ENCODE measurements at regions of chr5 and their contacts with region 1.

Region 1: GRCh38 chr5:76544268-76544926 is 78.8 kb downstream of the F2RL2 start:
- DNase-seq: peak; percentile 79
- ATAC-seq: peak; percentile 34
- H3K4me3 Mint-ChIP-seq: peak overlapping the region; percentile 73
- H3K27ac Mint-ChIP-seq: peak overlapping the region; percentile 100
- H3K4me1 Mint-ChIP-seq: peaks cover 90% of the 10 kb centered on the region
- H3K27me3 Mint-ChIP-seq: no peaks in the 10 kb centered on the region

Region 2: DNA sequence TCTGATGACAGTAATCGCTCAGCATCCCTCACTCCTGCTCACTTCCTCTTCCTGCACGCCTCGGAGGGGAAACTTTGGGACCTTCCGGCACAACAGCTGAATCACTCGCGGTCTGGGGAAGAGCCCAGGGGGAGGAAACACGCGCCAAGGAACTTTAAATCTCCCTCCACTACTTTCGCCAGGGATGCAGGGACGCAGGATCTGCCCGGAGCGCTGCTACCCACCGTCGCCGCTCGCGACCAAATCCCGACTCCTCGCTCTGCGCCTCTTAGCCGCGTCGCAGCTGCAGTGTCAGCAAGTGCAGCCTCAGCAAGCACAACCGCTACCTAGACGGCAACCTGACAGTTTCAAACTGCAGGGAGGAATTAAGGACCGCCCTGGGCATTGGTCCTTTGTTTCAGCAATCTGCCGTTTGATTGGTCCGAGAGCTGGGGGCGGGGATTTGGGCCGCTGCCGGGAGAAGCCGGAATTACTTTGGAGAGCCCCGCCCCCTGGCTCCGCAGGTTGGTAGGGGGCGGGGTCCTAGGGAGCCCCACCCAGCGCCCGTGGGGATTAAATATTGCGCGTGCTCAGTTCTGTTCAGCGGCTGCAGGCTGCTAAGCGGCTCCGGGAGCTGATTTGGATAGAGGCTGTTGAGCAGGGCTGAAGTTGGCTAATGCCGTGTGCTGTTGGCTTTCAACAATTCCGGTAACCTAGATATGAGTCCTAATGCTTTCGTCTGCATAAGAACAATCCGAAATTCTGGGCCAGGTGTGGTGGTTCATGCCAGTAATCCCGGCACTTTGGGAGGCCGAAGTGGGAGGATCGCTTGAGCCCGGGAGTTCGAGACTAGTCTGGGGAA is 827.1 kb before region 1 on chr5 and contains the start of gene POC5:
- CTCF ChIA-PET with region 1: no interaction called
- POLR2A ChIA-PET with region 1: no interaction called
- intact Hi-C with region 1: loop called in 1 of 2 experiments (anchors 2 kb)
- DNase-seq: peak; percentile 99
- ATAC-seq: peak; percentile 94
- H3K4me3 Mint-ChIP-seq: peak within 1 kb of the TSS; percentile 97
- H3K27ac Mint-ChIP-seq: peak within 1 kb of the TSS; percentile 99
- H3K4me1 Mint-ChIP-seq: peaks cover 32% of the 10 kb centered on the region
- H3K27me3 Mint-ChIP-seq: no peaks in the 10 kb centered on the region
- total RNA-seq, gene POC5: 20.2 to 20.3 TPM

Region 3: GRCh38 chr5:76180814-76181805 is 363.3 kb before region 1 on chr5:
- CTCF ChIA-PET with region 1: interaction called, 6 read pairs
- POLR2A ChIA-PET with region 1: no interaction called
- intact Hi-C with region 1: loop called (anchors 5 to 10 kb)
- DNase-seq: peak; percentile 28
- ATAC-seq: peak; percentile 82
- H3K4me3 Mint-ChIP-seq: no peak overlapping the region
- H3K27ac Mint-ChIP-seq: no peak overlapping the region
- H3K4me1 Mint-ChIP-seq: peaks cover 21% of the 10 kb centered on the region
- H3K27me3 Mint-ChIP-seq: no peaks in the 10 kb centered on the region

Region 4: GRCh38 chr5:76337953-76338451 is 206.4 kb before region 1 on chr5:
- CTCF ChIA-PET with region 1: interaction called, 14 read pairs
- POLR2A ChIA-PET with region 1: no interaction called
- intact Hi-C with region 1: loop called (anchors 1 kb)
- DNase-seq: peak; percentile 47
- ATAC-seq: peak; percentile 80
- H3K4me3 Mint-ChIP-seq: no peak overlapping the region
- H3K27ac Mint-ChIP-seq: no peak overlapping the region
- H3K4me1 Mint-ChIP-seq: peaks cover 25% of the 10 kb centered on the region
- H3K27me3 Mint-ChIP-seq: no peaks in the 10 kb centered on the region

Region 5: DNA sequence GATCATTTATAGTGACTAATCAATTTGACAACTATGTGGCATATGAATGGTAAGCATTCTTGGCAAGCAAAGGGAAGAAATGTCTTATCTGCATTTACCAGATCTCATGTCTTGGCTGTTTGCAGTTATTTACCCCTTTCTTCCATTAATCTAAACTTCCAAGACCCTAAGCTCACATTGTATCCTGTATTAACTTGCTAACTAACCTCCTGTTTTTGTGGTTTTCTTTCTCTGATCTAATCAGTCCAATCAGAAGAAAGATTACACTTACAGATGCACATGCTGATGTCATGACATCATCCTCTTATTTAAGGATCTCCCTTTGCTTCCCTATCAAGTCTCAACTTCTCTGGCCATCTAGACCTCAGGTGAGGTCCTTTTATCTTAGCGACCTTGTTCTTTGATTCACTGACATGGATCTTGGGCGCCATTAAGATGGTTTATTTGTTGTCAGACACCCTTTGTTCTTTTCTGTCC is 16.7 kb before region 1 on chr5:
- CTCF ChIA-PET with region 1: interaction called, 30 read pairs
- POLR2A ChIA-PET with region 1: interaction called, 12 read pairs
- intact Hi-C with region 1: no loop called
- DNase-seq: no peak
- ATAC-seq: no peak
- H3K4me3 Mint-ChIP-seq: no peak overlapping the region
- H3K27ac Mint-ChIP-seq: no peak overlapping the region
- H3K4me1 Mint-ChIP-seq: peaks cover 77% of the 10 kb centered on the region
- H3K27me3 Mint-ChIP-seq: no peaks in the 10 kb centered on the region